CD14-positive monocyte (primary cell): ENCODE measurements at regions of chr19 and their contacts with region 1.

Region 1: GRCh38 chr19:4638828-4639530 is at the start of gene TNFAIP8L1:
- DNase-seq: peak; percentile 96 to 98 (median 96)
- H3K4me3 ChIP-seq: peak within 1 kb of the TSS; percentile 94 to 99 (median 96)
- H3K4me3 Mint-ChIP-seq: peak within 1 kb of the TSS; percentile 98 to 99
- H3K27ac ChIP-seq: peak within 1 kb of the TSS; percentile 88 to 93
- H3K27ac Mint-ChIP-seq: peak within 1 kb of the TSS; percentile 96 to 98 (median 96)
- H3K4me1 ChIP-seq: peaks cover 56 to 65% of the 10 kb centered on the region in 2 donors
- H3K4me1 Mint-ChIP-seq: peaks cover 53% of the 10 kb centered on the region
- H3K27me3 ChIP-seq: no peaks in the 10 kb centered on the region
- H3K27me3 Mint-ChIP-seq: peaks cover 0 to 6% (median 5%) of the 10 kb centered on the region in 3 donors
- CTCF ChIP-seq: no peak
- polyA plus RNA-seq, gene TNFAIP8L1: 1.8 to 3.9 (median 3.7) TPM

Region 2: GRCh38 chr19:4471403-4472173 is 167.4 kb before region 1 on chr19:
- intact Hi-C with region 1: loop called in 1 of 2 experiments (anchors 1 kb)
- DNase-seq: peak; percentile 99 to 100 (median 100)
- H3K4me3 ChIP-seq: peak overlapping the region; percentile 74 to 94 (median 83)
- H3K4me3 Mint-ChIP-seq: no peak overlapping the region
- H3K27ac ChIP-seq: peak overlapping the region; percentile 74 to 87
- H3K27ac Mint-ChIP-seq: no peak overlapping the region
- H3K4me1 ChIP-seq: peaks cover 30 to 35% of the 10 kb centered on the region in 2 donors
- H3K4me1 Mint-ChIP-seq: peaks cover 24% of the 10 kb centered on the region
- H3K27me3 ChIP-seq: no peaks in the 10 kb centered on the region
- H3K27me3 Mint-ChIP-seq: peaks cover 0 to 1% (median 0%) of the 10 kb centered on the region in 3 donors
- CTCF ChIP-seq: no peak

Region 3: DNA sequence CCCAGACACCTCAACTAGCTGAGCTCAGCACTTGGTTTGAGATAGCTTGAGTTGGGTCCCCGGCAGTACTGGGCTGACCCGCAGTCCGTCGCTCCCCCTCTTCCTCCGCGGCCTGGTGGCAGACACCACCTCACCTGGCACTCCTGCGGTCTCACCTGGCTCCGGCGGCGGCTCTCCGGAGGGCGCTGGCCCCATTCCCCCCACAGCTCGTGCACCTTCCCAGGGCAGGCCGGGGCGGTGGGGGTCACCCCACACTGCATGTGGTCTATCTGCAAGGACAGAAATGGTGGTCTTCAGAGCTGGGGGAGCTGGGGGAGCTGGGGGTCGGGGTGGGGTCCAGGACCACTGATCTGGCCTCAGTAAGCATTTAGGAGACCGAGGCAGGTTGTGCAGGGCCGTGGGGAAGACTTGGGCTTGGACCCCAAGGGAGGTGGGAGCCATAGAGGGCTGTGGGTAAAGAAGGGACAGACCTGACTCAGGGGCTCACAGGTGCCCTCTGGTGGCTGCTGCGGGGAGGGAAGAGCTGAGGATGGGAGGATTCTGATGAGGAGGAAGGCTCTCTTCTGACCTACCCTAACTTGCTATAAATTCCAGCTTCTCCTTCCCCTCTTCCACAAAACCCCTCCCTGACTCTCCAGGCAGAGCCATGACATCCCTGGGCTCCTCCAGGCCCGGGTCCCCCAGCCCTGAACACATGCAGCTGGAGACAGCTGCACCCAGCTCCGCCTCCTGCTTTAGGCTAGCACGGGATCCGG is 114.0 kb before region 1 on chr19:
- intact Hi-C with region 1: loop called in 1 of 2 experiments (anchors 5 kb)
- DNase-seq: peak; percentile 61 to 66 (median 62)
- H3K4me3 ChIP-seq: no peak overlapping the region
- H3K4me3 Mint-ChIP-seq: no peak overlapping the region
- H3K27ac ChIP-seq: no peak overlapping the region
- H3K27ac Mint-ChIP-seq: peak overlapping the region in 1 of 7 donors; percentile 6
- H3K4me1 ChIP-seq: peaks cover 0 to 4% of the 10 kb centered on the region in 2 donors
- H3K4me1 Mint-ChIP-seq: peaks cover 2% of the 10 kb centered on the region
- H3K27me3 ChIP-seq: no peaks in the 10 kb centered on the region
- H3K27me3 Mint-ChIP-seq: peaks cover 0 to 8% (median 4%) of the 10 kb centered on the region in 3 donors
- CTCF ChIP-seq: peak; percentile 83

Region 4: GRCh38 chr19:4539693-4540581 is 99.0 kb before region 1 on chr19 and contains the start of gene LRG1:
- intact Hi-C with region 1: loop called (anchors 5 kb)
- DNase-seq: peak; percentile 91 to 98 (median 96)
- H3K4me3 ChIP-seq: peak within 1 kb of the TSS in 1 of 3 experiments; percentile 55
- H3K4me3 Mint-ChIP-seq: peak within 1 kb of the TSS; percentile 62 to 85
- H3K27ac ChIP-seq: peak within 1 kb of the TSS; percentile 92 to 98
- H3K27ac Mint-ChIP-seq: peak within 1 kb of the TSS; percentile 97 to 99 (median 98)
- H3K4me1 ChIP-seq: peaks cover 83 to 96% of the 10 kb centered on the region in 2 donors
- H3K4me1 Mint-ChIP-seq: peaks cover 72% of the 10 kb centered on the region
- H3K27me3 ChIP-seq: peaks cover 0 to 2% of the 10 kb centered on the region in 2 donors
- H3K27me3 Mint-ChIP-seq: peaks cover 2 to 11% (median 3%) of the 10 kb centered on the region in 3 donors
- CTCF ChIP-seq: no peak
- polyA plus RNA-seq, gene LRG1: 5.5 to 50.1 (median 9.6) TPM